Mucosa of descending colon (tissue), 3 donors: ENCODE measurements at regions of chr6 and their contacts with region 1.

Region 1: DNA sequence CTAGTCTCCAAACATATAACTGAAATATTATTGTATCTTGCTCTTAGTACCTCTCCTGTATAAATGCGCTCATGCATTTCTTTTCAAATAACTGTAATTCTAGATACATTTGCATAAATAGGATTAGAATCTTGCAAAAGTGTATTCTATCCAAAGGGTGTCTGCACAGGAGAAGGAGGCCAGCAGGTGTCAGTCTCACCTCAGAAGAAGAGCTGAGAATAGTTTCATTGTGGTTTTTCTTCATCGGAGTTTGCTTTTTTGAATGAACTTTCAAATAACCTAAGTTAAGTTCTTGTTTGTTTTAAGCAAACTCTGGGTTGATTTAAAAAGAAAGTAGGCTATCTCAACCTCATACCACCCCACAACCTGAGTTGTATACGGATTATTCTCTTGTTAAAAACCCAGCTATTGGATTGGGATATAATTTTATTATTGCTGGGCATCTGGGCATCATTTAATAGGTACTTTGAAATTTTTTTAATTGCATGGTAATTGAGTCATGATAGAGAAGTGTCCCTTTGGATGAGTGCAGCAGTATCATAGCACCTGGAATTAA is 125.0 kb upstream of the MLIP start:
- DNase-seq: peak in 2 of 3 donors; percentile 37 to 81
- ATAC-seq: peak; percentile 75
- H3K4me3 ChIP-seq: no peak overlapping the region
- H3K4me1 ChIP-seq: no peaks in the 10 kb centered on the region
- CTCF ChIP-seq: peak; percentile 54

Region 2: GRCh38 chr6:53854843-53855567 is 131.2 kb before region 1 on chr6:
- intact Hi-C with region 1: no loop called
- DNase-seq: no peak
- ATAC-seq: peak; percentile 89
- H3K4me3 ChIP-seq: no peak overlapping the region
- H3K4me1 ChIP-seq: peaks cover 15% of the 10 kb centered on the region
- CTCF ChIP-seq: no peak

Region 3: DNA sequence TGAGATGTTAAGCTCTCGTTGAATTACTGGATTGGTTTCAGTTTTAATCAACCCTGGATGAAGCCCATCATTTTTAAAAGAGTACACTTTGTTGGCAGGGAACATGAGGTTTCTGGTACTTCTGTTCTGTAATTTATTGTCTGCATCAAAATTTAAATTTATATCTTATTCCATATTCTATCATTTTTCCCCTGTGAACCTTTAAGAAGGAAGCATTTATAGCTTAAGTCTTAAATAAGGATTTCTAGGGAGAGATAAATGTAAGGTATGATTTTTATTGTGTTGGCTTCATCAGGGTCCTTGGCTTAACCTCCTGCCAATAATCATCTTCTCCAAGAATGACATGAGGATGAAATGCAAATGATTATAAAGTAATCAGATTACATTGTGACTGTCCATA is 165.6 kb after region 1 on chr6:
- intact Hi-C with region 1: no loop called
- DNase-seq: no peak
- ATAC-seq: no peak
- H3K4me3 ChIP-seq: no peak overlapping the region
- H3K4me1 ChIP-seq: no peaks in the 10 kb centered on the region
- CTCF ChIP-seq: no peak

Region 4: DNA sequence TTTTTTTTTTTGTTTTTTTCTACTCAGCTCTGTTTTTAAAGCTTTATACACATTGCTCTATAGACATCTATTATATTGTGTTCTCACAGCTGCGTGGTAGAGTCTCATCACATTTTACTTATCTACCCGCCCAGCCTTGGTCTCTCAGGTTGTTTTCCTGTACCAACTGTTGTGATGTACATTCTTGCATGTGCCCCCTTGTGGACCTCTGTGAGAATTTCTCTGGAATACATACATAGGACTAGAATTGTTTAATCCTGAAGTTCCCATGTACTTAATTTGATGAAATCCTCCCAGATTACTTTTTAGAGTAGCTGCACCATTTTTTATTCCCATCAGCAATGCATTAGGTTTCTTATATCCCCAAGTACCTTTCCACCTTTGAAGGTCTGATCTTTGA is 281.6 kb after region 1 on chr6:
- intact Hi-C with region 1: loop called in 1 of 2 experiments (anchors 5 kb)
- DNase-seq: peak in 1 of 3 donors; percentile 79
- ATAC-seq: peak; percentile 64
- H3K4me3 ChIP-seq: no peak overlapping the region
- H3K4me1 ChIP-seq: peaks cover 6% of the 10 kb centered on the region
- CTCF ChIP-seq: no peak

Region 5: GRCh38 chr6:55239099-55239498 is 1252.9 kb after region 1 on chr6:
- intact Hi-C with region 1: loop called in 1 of 2 experiments (anchors 10 kb)
- DNase-seq: no peak
- ATAC-seq: no peak
- H3K4me3 ChIP-seq: no peak overlapping the region
- H3K4me1 ChIP-seq: no peaks in the 10 kb centered on the region
- CTCF ChIP-seq: no peak